Activated CD4-positive, alpha-beta T cell treated with anti-CD3 and anti-CD28 coated beads, Interleukin-2, amount 10 ng/mL, durations not matched to agents 24 days and 14 days (primary cell): ENCODE measurements at regions of chr17 and their contacts with region 1.

Region 1: GRCh38 chr17:66508896-66509843 is 206.8 kb downstream of the PRKCA start:
- DNase-seq: peak; percentile 78
- H3K4me3 Mint-ChIP-seq: peak overlapping the region; percentile 62
- H3K27ac Mint-ChIP-seq: peak overlapping the region; percentile 96
- H3K4me1 Mint-ChIP-seq: peaks cover 68% of the 10 kb centered on the region
- H3K27me3 Mint-ChIP-seq: no peaks in the 10 kb centered on the region

Region 2: GRCh38 chr17:66310528-66311148 is 198.5 kb before region 1 on chr17:
- intact Hi-C with region 1: loop called (anchors 2 kb)
- DNase-seq: no peak
- H3K4me3 Mint-ChIP-seq: peak overlapping the region; percentile 77
- H3K27ac Mint-ChIP-seq: peak overlapping the region; percentile 80
- H3K4me1 Mint-ChIP-seq: peaks cover 82% of the 10 kb centered on the region
- H3K27me3 Mint-ChIP-seq: no peaks in the 10 kb centered on the region

Region 3: DNA sequence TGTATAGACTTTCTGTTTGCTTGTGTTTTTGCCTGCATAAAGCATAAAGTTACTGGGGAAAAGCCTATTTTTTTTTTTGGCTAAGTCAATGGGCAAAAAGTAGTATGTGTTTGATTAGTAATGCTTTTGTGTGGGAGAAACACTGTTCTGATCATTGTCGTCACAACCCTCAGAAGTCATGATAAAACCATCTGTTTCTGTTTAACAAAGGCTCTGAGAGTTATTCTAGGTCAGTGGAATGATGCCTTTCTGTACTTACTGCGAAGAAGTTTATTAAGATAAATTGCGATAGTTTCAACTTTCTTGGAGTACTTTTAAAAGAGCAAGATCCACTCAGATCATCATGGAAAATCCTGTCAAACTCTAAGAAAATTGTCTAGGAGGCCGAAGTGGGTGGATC is 125.8 kb before region 1 on chr17:
- intact Hi-C with region 1: no loop called
- DNase-seq: no peak
- H3K4me3 Mint-ChIP-seq: no peak overlapping the region
- H3K27ac Mint-ChIP-seq: peak overlapping the region; percentile 66
- H3K4me1 Mint-ChIP-seq: peaks cover 53% of the 10 kb centered on the region
- H3K27me3 Mint-ChIP-seq: no peaks in the 10 kb centered on the region

Region 4: GRCh38 chr17:66493991-66494803 is 15.0 kb before region 1 on chr17:
- intact Hi-C with region 1: loop called (anchors 2 kb)
- DNase-seq: peak; percentile 64
- H3K4me3 Mint-ChIP-seq: peak overlapping the region; percentile 2
- H3K27ac Mint-ChIP-seq: peak overlapping the region; percentile 62
- H3K4me1 Mint-ChIP-seq: peaks cover 45% of the 10 kb centered on the region
- H3K27me3 Mint-ChIP-seq: no peaks in the 10 kb centered on the region

Region 5: DNA sequence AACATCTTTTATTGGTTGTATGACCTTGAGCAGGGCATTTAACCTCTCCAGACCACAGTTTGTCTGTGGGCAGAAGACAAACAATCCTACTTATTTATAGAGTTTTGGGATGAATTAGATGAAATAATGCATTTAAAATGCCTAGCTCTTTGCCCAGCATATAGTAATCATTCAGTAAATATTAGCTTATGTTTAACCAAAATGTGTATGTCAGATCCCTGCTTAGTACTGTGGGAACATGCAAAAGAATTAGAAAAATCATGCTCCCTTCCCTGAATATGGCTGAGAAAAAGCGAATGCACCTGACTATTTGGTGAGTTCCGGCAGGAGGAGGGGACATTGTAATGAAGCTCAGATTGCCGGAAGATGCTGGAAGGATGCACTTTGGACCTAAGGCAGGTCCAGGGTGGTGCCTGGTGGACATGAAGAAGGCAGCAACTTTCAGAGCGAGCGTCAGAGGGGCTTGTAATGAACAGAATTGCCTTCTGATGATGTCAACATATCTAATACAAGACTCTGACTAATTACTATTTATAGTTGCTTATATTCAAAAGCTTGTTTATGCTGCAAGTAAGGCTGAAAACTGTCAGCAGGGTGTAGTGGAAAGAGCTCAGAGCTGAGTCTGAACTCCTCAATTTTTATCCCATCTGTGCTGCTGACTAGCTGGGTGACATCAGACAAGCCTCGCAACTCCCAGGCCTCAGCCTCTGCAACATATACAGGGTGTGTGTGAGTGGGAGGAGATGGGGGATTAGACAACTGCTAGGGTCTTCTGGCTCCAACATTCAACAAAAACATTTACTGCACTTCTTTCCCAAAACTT is 14.4 kb after region 1 on chr17:
- intact Hi-C with region 1: loop called (anchors 1 kb)
- DNase-seq: no peak
- H3K4me3 Mint-ChIP-seq: no peak overlapping the region
- H3K27ac Mint-ChIP-seq: peak overlapping the region; percentile 64
- H3K4me1 Mint-ChIP-seq: peaks cover 64% of the 10 kb centered on the region
- H3K27me3 Mint-ChIP-seq: no peaks in the 10 kb centered on the region

Region 6: GRCh38 chr17:66549731-66550207 is 40.6 kb after region 1 on chr17:
- intact Hi-C with region 1: loop called (anchors 1 kb)
- DNase-seq: no peak
- H3K4me3 Mint-ChIP-seq: no peak overlapping the region
- H3K27ac Mint-ChIP-seq: no peak overlapping the region
- H3K4me1 Mint-ChIP-seq: peaks cover 45% of the 10 kb centered on the region
- H3K27me3 Mint-ChIP-seq: no peaks in the 10 kb centered on the region